HEK293 (cell line): ENCODE measurements at regions of chr2 and their contacts with region 1.

Region 1: DNA sequence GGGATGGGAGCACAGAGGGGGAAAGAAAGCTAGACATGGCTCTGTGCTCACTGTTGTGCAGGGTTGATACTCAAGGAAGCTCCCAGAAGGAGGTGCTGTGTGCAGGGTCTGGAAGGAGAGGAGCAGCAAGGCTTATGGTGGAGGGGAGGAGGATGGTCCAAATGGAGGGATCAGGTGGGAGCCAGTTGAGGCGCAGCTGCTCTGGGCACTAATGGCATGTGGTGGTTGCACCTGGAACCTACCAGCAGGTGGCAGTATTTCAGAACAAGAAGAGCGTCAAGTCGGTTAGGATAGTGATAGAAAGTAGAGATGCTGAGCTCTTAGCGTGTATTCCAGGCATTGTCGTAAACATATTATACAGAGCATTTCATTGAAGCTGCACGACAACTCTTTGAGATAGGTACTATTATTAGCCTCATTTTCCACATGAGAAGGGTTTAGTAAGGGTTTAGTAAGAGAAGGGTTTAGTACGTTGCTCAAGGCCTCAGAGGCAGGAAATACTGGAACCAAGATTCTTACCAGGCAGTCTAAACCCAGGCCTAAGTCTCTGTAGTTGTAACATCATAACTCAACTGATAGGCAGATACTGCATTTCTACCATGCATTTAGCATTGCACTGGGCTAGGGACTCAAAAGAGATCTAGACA is 223.7 kb downstream of the CYP26B1 start:
- H3K4me3 ChIP-seq: no peak overlapping the region
- H3K27ac ChIP-seq: no peak overlapping the region
- H3K4me1 ChIP-seq: no peaks in the 10 kb centered on the region
- CTCF ChIP-seq: peak; percentile 76

Region 2: GRCh38 chr2:70104231-70105111 is 1819.5 kb before region 1 on chr2:
- CTCF ChIA-PET with region 1: no interaction called
- POLR2A ChIA-PET with region 1: no interaction called
- H3K4me3 ChIP-seq: no peak overlapping the region
- H3K27ac ChIP-seq: peak overlapping the region; percentile 56; the same call in 1 of the 2 replicates
- H3K4me1 ChIP-seq: peaks cover 10% of the 10 kb centered on the region
- CTCF ChIP-seq: no peak

Region 3: DNA sequence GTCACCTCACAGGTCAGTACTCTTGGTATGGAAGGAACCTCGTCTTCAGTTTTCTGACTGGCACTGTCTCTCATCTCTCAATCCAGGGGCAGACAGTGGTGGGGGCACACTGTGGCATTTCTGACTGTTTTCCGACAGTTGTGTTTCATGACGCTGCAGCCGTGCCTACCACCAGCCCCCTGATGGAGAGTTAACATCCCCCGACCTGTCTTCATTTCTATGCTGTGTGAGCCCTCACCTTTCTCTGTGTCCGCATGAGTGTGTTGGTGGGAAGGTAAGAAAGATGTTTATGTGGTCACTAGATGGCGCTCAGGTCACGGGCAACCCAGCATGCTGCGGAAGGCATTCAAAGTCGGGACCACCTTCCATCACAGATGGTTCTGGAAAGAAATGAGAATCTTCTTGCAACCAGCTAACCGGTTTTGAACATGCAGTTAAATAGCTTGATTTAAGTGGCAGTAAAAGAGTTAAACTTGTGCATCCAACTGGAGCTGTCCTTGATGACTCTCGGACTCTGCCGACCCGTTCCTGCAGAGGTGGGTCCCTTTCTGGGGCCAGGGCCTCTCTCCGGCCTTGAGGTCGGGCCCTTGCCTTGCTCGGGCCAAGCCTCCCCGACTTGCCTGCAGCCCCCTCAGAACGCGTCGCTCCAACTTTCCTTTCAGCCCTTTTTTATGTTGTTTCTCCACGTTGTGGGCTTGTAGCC is 378.3 kb before region 1 on chr2:
- CTCF ChIA-PET with region 1: interaction called, 10 read pairs
- POLR2A ChIA-PET with region 1: no interaction called
- H3K4me3 ChIP-seq: no peak overlapping the region
- H3K27ac ChIP-seq: no peak overlapping the region
- H3K4me1 ChIP-seq: no peaks in the 10 kb centered on the region
- CTCF ChIP-seq: peak; percentile 78

Region 4: GRCh38 chr2:71905205-71905604 is 18.8 kb before region 1 on chr2:
- CTCF ChIA-PET with region 1: interaction called, 43 read pairs
- POLR2A ChIA-PET with region 1: no interaction called
- H3K4me3 ChIP-seq: no peak overlapping the region
- H3K27ac ChIP-seq: no peak overlapping the region
- H3K4me1 ChIP-seq: no peaks in the 10 kb centered on the region
- CTCF ChIP-seq: no peak

Region 5: GRCh38 chr2:71938659-71939587 is 14.9 kb after region 1 on chr2:
- CTCF ChIA-PET with region 1: interaction called, 16 read pairs
- POLR2A ChIA-PET with region 1: no interaction called
- H3K4me3 ChIP-seq: no peak overlapping the region
- H3K27ac ChIP-seq: no peak overlapping the region
- H3K4me1 ChIP-seq: no peaks in the 10 kb centered on the region
- CTCF ChIP-seq: no peak

Region 6: DNA sequence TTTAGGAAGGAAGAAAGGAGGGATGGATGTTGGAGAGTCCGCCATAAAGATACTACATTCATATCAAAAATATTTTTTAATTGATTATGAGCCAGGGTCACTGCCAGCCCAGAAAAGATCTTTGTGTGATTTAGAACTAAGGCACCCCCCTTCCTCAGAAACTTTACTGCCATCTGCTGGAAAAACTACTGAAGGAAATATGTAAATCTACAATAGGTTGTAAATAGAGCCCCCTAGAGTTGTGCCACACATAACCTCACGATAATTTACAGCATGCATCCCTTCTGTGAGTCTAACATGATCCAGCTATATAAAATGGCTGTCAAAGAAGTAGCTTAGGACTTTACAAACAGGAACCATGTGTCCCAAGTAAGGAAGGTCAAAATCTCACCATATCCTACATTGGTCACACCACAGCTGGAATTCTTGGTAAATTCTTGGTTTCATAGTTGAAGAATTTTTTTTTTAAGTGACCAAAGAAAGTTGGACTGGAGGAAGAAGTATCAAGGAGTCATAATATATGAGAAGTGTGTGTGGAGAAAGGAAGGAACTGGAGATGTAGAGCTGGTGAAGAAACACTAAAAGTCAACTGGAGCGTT is 71.2 kb after region 1 on chr2:
- CTCF ChIA-PET with region 1: interaction called, 19 read pairs
- POLR2A ChIA-PET with region 1: no interaction called
- H3K4me3 ChIP-seq: no peak overlapping the region
- H3K27ac ChIP-seq: no peak overlapping the region
- H3K4me1 ChIP-seq: no peaks in the 10 kb centered on the region
- CTCF ChIP-seq: no peak

Region 7: DNA sequence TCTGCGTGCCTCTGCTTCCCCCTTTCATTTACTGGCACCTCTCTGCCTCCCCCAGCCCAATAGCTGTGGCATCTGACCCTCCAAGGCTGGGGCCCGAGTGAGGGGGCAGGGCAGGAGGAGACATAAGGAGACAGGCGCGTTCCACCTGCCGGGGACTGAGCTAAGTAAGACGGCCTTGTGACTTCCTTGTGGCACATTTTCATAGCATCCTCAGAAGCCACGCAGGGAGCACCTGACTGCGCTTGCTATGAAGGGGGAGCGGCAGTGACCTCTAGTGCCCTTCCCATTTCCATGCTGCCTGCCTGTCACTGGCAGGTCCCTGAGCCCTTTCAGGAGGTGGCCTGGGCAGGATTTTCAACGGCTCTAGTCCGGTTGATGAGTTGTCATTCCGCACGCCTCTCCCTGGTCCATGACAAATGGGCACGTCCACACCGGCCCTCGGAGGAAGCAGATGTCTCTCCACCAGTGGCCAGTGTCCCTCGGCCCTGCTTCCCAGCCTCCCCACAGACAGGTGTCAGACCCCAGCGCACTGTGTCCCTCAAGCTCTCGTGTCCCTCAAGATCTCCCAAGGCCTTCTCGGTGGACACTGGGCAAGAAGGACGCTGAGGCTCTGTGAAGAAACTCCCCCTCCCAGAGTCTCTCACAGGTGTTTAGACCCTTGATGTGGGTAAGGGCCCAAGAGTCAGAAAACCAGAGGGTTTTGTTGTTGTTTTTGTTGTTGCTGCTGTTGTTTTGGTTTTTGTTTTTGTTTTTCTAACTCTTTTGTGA is 181.0 kb after region 1 on chr2:
- CTCF ChIA-PET with region 1: no interaction called
- POLR2A ChIA-PET with region 1: no interaction called
- H3K4me3 ChIP-seq: no peak overlapping the region
- H3K27ac ChIP-seq: no peak overlapping the region
- H3K4me1 ChIP-seq: peaks cover 3% of the 10 kb centered on the region; the same call in 1 of the 2 replicates
- CTCF ChIP-seq: no peak

Region 8: DNA sequence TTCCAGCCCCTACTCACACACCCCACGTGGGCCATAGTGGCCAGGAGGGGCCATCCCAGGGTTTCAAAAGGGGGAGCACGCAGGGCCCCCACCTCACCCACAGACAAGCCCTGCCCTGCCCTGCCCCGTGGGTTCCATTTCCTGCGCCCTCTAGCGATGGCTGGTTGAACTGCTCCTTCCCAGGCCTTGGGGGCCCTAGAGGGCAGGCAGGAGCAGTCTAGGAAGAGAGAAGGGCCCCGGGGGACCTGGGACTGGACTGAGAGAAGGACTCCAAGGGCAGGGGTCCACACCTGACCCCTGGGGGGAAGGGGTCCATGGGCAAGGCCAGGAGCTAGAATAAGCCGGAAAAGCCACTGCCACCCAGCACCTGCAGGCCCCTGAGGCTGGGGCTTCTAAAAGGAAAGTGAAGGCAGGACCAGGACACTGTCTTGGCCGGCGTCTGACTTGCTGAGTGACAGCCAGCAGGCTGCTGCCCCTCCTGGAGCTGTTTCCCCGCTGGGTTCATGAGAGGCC is 213.5 kb after region 1 on chr2:
- CTCF ChIA-PET with region 1: interaction called, 13 read pairs
- POLR2A ChIA-PET with region 1: no interaction called
- H3K4me3 ChIP-seq: no peak overlapping the region
- H3K27ac ChIP-seq: no peak overlapping the region
- H3K4me1 ChIP-seq: no peaks in the 10 kb centered on the region
- CTCF ChIP-seq: peak; percentile 89

Region 9: GRCh38 chr2:72579591-72580180 is 655.7 kb after region 1 on chr2:
- CTCF ChIA-PET with region 1: interaction called, 11 read pairs
- POLR2A ChIA-PET with region 1: no interaction called
- H3K4me3 ChIP-seq: no peak overlapping the region
- H3K27ac ChIP-seq: no peak overlapping the region
- H3K4me1 ChIP-seq: no peaks in the 10 kb centered on the region
- CTCF ChIP-seq: no peak; the same call in 1 of the 2 replicates